Heart left ventricle (tissue), 16 donors: ENCODE measurements at regions of chr19 and their contacts with region 1.

Region 1: DNA sequence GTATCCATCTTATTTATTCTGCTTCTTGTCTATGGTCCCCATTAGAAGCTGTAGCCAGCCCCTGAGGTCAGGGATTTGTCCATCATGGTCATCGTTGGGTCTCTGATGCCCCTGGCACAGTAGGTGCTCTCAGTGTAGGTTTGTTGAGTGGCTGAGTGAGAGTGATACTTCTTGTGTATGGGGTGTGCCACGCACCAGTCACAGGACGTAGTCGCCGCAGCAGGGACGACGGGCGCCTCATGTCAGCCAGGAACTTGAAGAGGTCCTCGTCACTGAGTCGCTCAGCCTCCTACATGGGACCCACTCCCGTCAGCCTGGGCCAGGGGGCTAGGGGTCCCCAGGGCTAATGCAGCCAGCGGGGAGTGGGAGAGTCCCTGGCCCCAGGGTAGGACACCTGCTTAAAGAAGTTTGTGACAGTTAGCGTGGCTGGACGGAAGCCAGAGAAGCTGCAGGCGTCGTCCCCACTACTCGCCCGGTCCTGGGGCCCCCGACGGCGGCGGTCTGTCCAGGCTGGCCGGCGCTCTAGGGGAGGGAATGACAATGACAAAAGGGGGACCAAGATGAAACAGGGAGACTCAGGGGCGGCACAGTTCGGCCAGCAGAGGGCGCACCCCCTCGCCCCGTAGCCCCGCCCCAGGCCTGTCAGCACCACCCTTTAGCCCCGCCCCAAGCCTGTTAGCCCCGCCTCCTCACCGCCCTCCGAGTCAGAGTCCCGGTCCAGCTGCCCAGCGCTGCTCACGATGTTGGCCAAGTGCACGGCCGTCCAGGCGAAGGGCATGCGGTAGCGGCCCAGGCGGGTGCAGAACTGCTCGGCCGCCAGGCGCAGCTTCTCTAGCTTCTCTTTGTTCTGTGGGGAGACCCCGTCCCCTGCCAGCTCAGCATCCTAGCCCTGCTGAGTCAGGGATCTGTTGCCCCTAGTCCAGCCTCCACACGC is 3.7 kb downstream of the ANGPTL8 start:
- DNase-seq: peak; percentile 94 to 98 (median 95)
- ATAC-seq: peak; percentile 87 to 94 (median 90)
- H3K4me3 ChIP-seq: no peak overlapping the region
- H3K27ac ChIP-seq: peak overlapping the region in 11 of 12 donors; percentile 60 to 89 (median 77)
- H3K4me1 ChIP-seq: peaks cover 4 to 42% (median 22%) of the 10 kb centered on the region in 12 donors
- H3K27me3 ChIP-seq: no peaks in the 10 kb centered on the region
- CTCF ChIP-seq: peak; percentile 80 to 97 (median 90)
- POLR2A ChIP-seq: peak in 1 of 2 donors; percentile 39

Region 2: GRCh38 chr19:10911579-10912363 is 331.4 kb before region 1 on chr19:
- intact Hi-C with region 1: no loop called
- DNase-seq: no peak
- ATAC-seq: no peak
- H3K4me3 ChIP-seq: no peak overlapping the region
- H3K27ac ChIP-seq: no peak overlapping the region
- H3K4me1 ChIP-seq: no peaks in the 10 kb centered on the region
- H3K27me3 ChIP-seq: no peaks in the 10 kb centered on the region
- CTCF ChIP-seq: no peak
- POLR2A ChIP-seq: no peak

Region 3: DNA sequence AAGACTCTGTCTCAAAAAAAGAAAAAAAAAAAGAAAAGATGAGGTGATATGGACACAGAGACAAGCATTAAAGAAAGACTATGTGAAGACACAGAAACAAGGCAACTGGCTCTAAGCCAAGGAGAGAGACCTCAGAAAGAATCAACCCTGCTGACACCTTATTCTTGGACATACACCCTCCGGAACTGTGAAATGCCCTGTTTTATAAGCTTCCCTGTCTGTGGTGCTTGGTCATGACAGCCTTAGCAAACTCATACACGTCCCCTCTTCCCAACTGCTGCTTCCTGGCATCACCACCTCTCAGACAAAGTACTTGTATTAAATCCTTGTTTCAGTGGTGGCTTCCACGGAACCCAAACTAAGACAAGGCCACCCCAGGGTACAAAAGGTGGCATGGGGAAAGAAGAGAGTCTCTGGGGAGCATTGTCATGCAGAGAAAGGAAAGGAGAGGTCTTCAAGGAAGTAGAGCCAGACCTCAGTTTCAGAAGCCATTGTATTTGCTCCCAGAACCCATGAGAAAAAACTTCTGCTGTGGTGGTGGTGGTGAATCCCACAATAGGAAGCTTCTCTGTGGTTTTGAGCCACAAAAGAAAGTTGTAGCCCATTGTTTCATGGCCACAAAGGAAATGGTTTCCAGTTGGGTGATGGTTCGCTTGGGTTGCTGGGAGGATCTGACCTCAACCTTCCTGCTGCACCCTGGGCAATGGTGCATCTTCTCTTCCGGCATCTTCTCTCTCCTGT is 36.5 kb after region 1 on chr19:
- intact Hi-C with region 1: loop called in 1 of 10 experiments (anchors 2 kb)
- DNase-seq: no peak
- ATAC-seq: peak in 1 of 4 donors; percentile 13
- H3K4me3 ChIP-seq: no peak overlapping the region
- H3K27ac ChIP-seq: peak overlapping the region in 10 of 12 donors; percentile 7 to 66 (median 48)
- H3K4me1 ChIP-seq: peaks cover 0 to 22% (median 12%) of the 10 kb centered on the region in 12 donors
- H3K27me3 ChIP-seq: peaks cover 0 to 23% (median 0%) of the 10 kb centered on the region in 9 donors
- CTCF ChIP-seq: no peak
- POLR2A ChIP-seq: no peak

Region 4: DNA sequence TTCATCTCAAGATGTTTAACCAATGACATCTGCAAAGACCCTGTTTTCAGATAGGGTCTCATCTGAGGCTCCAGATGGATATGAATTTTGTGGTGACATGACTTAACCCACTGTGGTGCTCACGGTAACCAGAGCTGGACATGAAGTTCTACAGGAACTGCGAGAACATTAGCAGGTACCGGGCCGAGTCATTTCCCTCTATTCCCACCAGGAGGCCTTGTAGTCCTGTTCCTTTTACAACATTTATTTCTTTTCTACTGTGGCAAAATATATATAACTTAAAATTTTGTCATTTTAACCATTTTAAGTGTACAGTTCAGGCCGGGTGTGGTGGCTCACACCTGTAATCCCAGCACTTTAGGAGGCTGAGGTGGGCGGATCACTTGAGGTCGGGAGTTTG is 45.2 kb after region 1 on chr19:
- intact Hi-C with region 1: loop called in 7 of 10 experiments (anchors 2 to 5 kb)
- DNase-seq: no peak
- ATAC-seq: no peak
- H3K4me3 ChIP-seq: no peak overlapping the region
- H3K27ac ChIP-seq: no peak overlapping the region
- H3K4me1 ChIP-seq: peaks cover 0 to 24% (median 9%) of the 10 kb centered on the region in 12 donors
- H3K27me3 ChIP-seq: no peaks in the 10 kb centered on the region
- CTCF ChIP-seq: peak in 10 of 12 donors; percentile 14 to 39 (median 30)
- POLR2A ChIP-seq: no peak